Activated CD8-positive, alpha-beta T cell treated with anti-CD3 and anti-CD28 coated beads, Interleukin-2, amount 10 ng/mL, durations not matched to agents 7 days and 5 days (primary cell): ENCODE measurements at regions of chr14 and their contacts with region 1.

Region 1: GRCh38 chr14:75577729-75578101 is 705 bp upstream of the FLVCR2 start:
- DNase-seq: peak; percentile 82
- ATAC-seq: peak; percentile 96
- H3K4me3 Mint-ChIP-seq: peak overlapping the region; percentile 77
- H3K27ac Mint-ChIP-seq: no peak overlapping the region
- H3K4me1 Mint-ChIP-seq: peaks cover 18% of the 10 kb centered on the region
- H3K27me3 Mint-ChIP-seq: peaks cover 5% of the 10 kb centered on the region

Region 2: GRCh38 chr14:75399821-75400678 is 177.7 kb before region 1 on chr14:
- CTCF ChIA-PET with region 1: no interaction called
- POLR2A ChIA-PET with region 1: no interaction called
- DNase-seq: no peak
- ATAC-seq: no peak
- H3K4me3 Mint-ChIP-seq: no peak overlapping the region
- H3K27ac Mint-ChIP-seq: peak overlapping the region; percentile 36
- H3K4me1 Mint-ChIP-seq: peaks cover 22% of the 10 kb centered on the region
- H3K27me3 Mint-ChIP-seq: peaks cover 21% of the 10 kb centered on the region

Region 3: DNA sequence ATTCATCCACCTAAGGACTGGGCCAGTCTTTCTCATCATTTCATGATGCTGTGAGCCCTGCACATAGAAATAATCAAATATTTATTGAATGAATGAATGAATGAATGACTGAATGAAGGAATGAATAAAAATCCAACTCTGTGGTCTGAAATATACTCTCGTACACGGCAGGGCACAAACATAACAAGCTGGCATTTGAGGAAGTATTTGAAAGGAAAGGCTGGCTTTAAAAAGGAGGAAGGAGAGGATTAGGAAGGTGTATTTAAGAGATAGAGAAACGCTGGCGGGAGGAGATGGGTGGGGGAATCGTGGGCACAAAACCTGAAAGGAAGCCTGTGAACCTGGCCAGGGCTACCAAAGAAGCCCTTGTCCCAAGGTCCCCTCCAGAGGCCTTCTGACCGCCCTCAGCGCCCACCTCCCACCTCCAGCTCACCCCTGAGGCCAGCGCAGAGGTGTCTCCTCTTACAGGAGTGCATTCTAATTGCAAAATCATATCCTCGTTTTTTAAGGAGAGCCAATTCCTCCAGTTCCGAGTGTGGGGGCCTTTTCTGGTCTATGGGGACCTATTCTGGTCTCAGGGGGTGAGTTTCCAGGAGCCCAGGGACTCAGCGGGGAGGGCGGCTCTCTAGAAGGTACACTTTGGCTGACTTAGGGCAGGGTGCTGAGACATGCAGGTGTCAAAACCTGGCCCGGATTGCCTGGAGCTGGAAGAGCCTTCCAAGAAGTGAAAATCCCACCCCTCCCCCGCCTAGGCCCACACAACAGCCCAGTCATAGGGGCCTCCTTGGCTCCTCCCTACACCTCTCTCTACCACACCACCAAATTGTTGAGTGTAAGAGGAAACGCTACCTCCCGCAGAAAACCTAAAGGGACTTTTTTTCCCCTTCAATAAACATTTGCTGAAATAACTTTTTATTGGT is 158.6 kb before region 1 on chr14:
- CTCF ChIA-PET with region 1: no interaction called
- POLR2A ChIA-PET with region 1: no interaction called
- DNase-seq: peak; percentile 82
- ATAC-seq: peak; percentile 96
- H3K4me3 Mint-ChIP-seq: peak overlapping the region; percentile 44
- H3K27ac Mint-ChIP-seq: peak overlapping the region; percentile 78
- H3K4me1 Mint-ChIP-seq: peaks cover 29% of the 10 kb centered on the region
- H3K27me3 Mint-ChIP-seq: peaks cover 5% of the 10 kb centered on the region

Region 4: DNA sequence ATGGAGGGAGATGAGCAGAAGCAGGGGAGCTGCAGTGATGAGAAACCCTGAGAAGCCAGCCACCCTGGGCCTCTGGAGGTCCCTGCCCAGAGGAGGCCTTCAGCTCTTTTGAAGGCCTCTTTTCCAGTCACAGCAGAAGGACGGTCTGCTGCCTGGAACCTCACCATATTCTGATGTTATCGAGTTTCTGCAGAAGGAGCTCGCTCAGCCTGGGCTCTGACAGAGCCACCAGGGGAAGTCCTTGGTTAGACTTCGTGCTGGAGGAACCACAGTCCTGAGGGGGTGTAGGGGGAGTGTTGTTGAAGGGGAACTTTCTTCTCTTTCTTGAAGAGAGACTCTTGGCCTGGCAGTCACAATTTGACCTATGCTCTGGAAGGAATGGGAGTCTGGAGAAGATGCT is 80.5 kb before region 1 on chr14:
- CTCF ChIA-PET with region 1: interaction called, 13 read pairs
- POLR2A ChIA-PET with region 1: no interaction called
- DNase-seq: peak; percentile 53
- ATAC-seq: peak; percentile 88
- H3K4me3 Mint-ChIP-seq: no peak overlapping the region
- H3K27ac Mint-ChIP-seq: peak overlapping the region; percentile 75
- H3K4me1 Mint-ChIP-seq: peaks cover 53% of the 10 kb centered on the region
- H3K27me3 Mint-ChIP-seq: no peaks in the 10 kb centered on the region

Region 5: GRCh38 chr14:75522224-75522982 is 55.3 kb before region 1 on chr14 and contains the start of gene BATF:
- CTCF ChIA-PET with region 1: interaction called, 17 read pairs
- POLR2A ChIA-PET with region 1: no interaction called
- DNase-seq: peak; percentile 87
- ATAC-seq: peak; percentile 84
- H3K4me3 Mint-ChIP-seq: peak within 1 kb of the TSS; percentile 100
- H3K27ac Mint-ChIP-seq: peak within 1 kb of the TSS; percentile 99
- H3K4me1 Mint-ChIP-seq: peaks cover 63% of the 10 kb centered on the region
- H3K27me3 Mint-ChIP-seq: no peaks in the 10 kb centered on the region
- total RNA-seq, gene BATF: 41.3 to 41.6 TPM

Region 6: GRCh38 chr14:75549169-75549568 is 28.5 kb before region 1 on chr14:
- CTCF ChIA-PET with region 1: interaction called, 12 read pairs
- POLR2A ChIA-PET with region 1: no interaction called
- DNase-seq: no peak
- ATAC-seq: no peak
- H3K4me3 Mint-ChIP-seq: no peak overlapping the region
- H3K27ac Mint-ChIP-seq: no peak overlapping the region
- H3K4me1 Mint-ChIP-seq: peaks cover 25% of the 10 kb centered on the region
- H3K27me3 Mint-ChIP-seq: no peaks in the 10 kb centered on the region

Region 7: DNA sequence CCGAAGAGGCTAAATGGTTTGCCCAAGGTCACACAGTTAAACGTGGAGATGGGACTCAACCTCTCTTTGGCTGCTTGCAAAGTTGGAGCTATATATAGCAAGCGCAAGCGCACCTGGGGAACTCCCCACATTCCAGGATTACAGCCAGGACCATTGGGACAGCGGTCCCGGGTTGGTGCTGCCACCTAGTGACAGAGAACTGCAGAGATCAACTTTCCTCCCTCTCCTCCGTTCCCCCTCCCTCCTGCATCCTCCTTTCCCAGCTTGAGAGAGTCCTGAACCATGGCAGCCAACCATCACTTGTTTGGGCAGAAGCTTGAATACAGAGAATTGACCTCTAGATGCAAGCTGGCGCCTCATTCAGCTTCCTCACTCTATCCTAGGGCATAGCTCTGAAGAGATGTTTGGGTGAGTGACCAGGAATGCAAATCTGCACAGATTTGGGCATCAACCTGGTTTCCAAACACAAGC is 16.7 kb before region 1 on chr14:
- CTCF ChIA-PET with region 1: interaction called, 49 read pairs
- POLR2A ChIA-PET with region 1: interaction called, 4 read pairs
- DNase-seq: peak; percentile 60
- ATAC-seq: peak; percentile 54
- H3K4me3 Mint-ChIP-seq: no peak overlapping the region
- H3K27ac Mint-ChIP-seq: no peak overlapping the region
- H3K4me1 Mint-ChIP-seq: peaks cover 54% of the 10 kb centered on the region
- H3K27me3 Mint-ChIP-seq: no peaks in the 10 kb centered on the region

Region 8: GRCh38 chr14:75660630-75661494 is 83.1 kb after region 1 on chr14 and contains the starts of genes ERG28 and TTLL5:
- CTCF ChIA-PET with region 1: interaction called, 255 read pairs
- POLR2A ChIA-PET with region 1: no interaction called
- DNase-seq: peak; percentile 98
- ATAC-seq: peak; percentile 99
- H3K4me3 Mint-ChIP-seq: peak within 1 kb of the TSS; percentile 100
- H3K27ac Mint-ChIP-seq: peak within 1 kb of the TSS; percentile 96
- H3K4me1 Mint-ChIP-seq: peaks cover 28% of the 10 kb centered on the region
- H3K27me3 Mint-ChIP-seq: no peaks in the 10 kb centered on the region
- total RNA-seq, gene ERG28: 19.0 to 19.2 TPM
- total RNA-seq, gene TTLL5: 40.1 to 45.0 TPM

Region 9: GRCh38 chr14:75982266-75983018 is 404.7 kb after region 1 on chr14:
- CTCF ChIA-PET with region 1: interaction called, 18 read pairs
- POLR2A ChIA-PET with region 1: no interaction called
- DNase-seq: peak; percentile 80
- ATAC-seq: peak; percentile 70
- H3K4me3 Mint-ChIP-seq: peak overlapping the region; percentile 69
- H3K27ac Mint-ChIP-seq: no peak overlapping the region
- H3K4me1 Mint-ChIP-seq: peaks cover 49% of the 10 kb centered on the region
- H3K27me3 Mint-ChIP-seq: peaks cover 11% of the 10 kb centered on the region